Stomach (tissue), 19 donors: ENCODE measurements at regions of chr15 and their contacts with region 1.

Region 1: DNA sequence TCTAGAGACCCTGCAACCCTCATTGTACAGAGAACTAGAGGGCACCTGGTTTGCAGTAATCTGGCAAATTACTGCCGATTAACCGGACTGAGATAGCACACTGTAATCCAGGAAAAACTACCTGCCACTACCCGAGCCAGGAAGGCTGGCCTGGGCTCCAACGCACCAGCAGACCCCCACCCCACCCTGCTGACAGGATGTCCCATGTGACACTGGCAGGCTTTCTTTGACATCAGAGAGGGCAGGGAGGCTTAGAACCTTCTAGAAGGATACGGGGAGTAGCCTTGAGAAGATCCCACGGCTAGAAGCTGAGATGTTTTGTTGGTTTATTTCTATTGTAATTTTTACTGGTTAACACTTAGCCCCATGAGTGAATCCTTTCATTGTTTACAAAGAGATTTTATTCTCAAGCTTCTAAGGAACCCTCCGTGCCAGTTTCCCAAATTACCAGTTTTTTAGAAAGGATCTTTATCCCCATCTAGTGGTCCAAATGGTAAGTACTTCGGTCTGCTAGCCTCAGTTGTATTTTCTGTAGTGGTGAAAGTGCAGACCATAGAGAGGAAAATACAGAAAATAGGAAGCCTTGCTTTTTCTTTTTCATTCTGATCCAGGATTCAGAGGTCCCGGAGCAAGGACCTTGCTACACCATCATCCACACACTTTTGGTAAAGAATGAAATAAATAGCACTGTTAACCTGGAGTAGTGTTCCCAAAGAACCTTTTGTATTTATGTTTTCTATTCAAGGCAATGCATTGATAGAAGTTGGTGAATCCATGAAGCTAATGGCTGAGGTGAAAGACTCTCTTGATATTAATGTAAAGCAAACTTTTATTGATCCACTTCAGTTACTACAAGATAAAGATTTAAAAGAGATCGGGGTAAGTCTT is 81.9 kb upstream of the ADAMTSL3 start:
- DNase-seq: peak in 1 of 2 donors; percentile 49
- H3K4me3 ChIP-seq: no peak overlapping the region
- H3K27ac ChIP-seq: no peak overlapping the region
- H3K4me1 ChIP-seq: no peaks in the 10 kb centered on the region
- H3K27me3 ChIP-seq: peaks cover 0 to 8% (median 0%) of the 10 kb centered on the region in 3 donors
- CTCF ChIP-seq: peak in 5 of 7 experiments; percentile 8 to 56 (median 27)
- EP300 ChIP-seq: no peak
- POLR2A ChIP-seq: no peak

Region 2: DNA sequence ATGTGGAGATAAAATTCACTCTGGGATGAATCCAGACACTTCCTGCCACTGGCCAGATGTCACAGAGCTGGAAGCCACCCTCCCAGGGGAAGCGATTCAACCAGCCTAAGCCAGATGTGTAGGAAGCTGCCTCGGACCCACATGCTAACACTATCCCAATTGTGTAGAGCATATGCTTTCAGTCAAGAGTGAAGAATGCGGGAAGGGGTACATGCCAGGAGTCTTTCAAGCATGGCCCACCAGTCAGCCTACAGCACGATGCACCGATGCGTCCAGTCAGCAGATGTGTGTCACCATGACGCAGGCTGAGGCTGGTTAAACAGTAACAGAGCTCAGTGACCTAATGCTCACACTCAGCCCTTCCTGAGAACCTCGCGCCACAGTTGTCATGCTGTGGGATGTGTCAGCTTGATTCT is 248.8 kb before region 1 on chr15:
- intact Hi-C with region 1: no loop called
- DNase-seq: peak in 1 of 2 donors; percentile 83
- H3K4me3 ChIP-seq: no peak overlapping the region
- H3K27ac ChIP-seq: no peak overlapping the region
- H3K4me1 ChIP-seq: no peaks in the 10 kb centered on the region
- H3K27me3 ChIP-seq: peaks cover 0 to 11% (median 0%) of the 10 kb centered on the region in 3 donors
- CTCF ChIP-seq: no peak
- EP300 ChIP-seq: no peak
- POLR2A ChIP-seq: no peak

Region 3: GRCh38 chr15:83435182-83435581 is 136.9 kb before region 1 on chr15:
- intact Hi-C with region 1: no loop called
- DNase-seq: no peak
- H3K4me3 ChIP-seq: no peak overlapping the region
- H3K27ac ChIP-seq: no peak overlapping the region
- H3K4me1 ChIP-seq: no peaks in the 10 kb centered on the region
- H3K27me3 ChIP-seq: peaks cover 0 to 43% (median 0%) of the 10 kb centered on the region in 3 donors
- CTCF ChIP-seq: no peak
- EP300 ChIP-seq: no peak
- POLR2A ChIP-seq: no peak

Region 4: DNA sequence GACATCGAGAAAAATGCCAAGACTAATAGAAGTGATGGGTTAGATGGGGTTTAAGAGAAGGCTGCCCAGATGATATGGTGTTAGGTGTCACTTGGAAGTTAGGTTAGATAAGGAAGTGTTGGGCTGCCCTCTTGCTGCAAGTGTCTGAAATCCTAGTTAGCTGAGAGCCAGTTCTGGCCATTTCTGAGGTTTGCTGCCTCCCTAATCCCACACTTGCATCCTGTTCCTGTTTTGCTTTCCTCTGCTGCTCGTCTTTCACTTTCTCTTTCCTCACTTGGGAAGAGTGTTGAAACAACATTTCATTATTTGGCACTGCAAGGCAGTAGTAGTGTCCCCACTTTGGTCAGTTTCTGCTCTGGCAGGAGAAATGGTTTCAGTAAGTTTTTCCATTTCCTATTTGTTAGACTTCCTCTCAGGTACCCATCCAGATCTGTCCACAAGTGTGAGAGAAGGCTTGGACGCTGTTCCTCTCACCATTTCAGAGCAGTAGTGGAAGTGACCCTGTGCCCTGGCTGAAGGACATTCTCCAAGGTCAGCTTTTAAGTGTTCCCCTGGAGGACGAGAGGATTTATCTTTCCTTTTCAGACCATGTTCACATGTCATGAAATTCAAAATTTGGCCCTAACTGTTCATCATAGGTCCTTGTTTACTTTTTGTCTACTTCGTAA is 175.1 kb after region 1 on chr15:
- intact Hi-C with region 1: loop called (anchors 10 kb)
- DNase-seq: peak in 1 of 2 donors; percentile 78
- H3K4me3 ChIP-seq: peak overlapping the region in 1 of 4 donors; percentile 7
- H3K27ac ChIP-seq: peak overlapping the region in 3 of 5 donors; percentile 56 to 74 (median 67)
- H3K4me1 ChIP-seq: peaks cover 0 to 10% (median 3%) of the 10 kb centered on the region in 4 donors
- H3K27me3 ChIP-seq: no peaks in the 10 kb centered on the region
- CTCF ChIP-seq: peak in 2 of 7 experiments; percentile 7 to 21
- EP300 ChIP-seq: no peak
- POLR2A ChIP-seq: no peak

Region 5: GRCh38 chr15:84035399-84035766 is 463.3 kb after region 1 on chr15:
- intact Hi-C with region 1: loop called (anchors 5 kb)
- DNase-seq: peak in 1 of 2 donors; percentile 58
- H3K4me3 ChIP-seq: no peak overlapping the region
- H3K27ac ChIP-seq: no peak overlapping the region
- H3K4me1 ChIP-seq: no peaks in the 10 kb centered on the region
- H3K27me3 ChIP-seq: no peaks in the 10 kb centered on the region
- CTCF ChIP-seq: peak in 1 of 7 experiments; percentile 15
- EP300 ChIP-seq: no peak
- POLR2A ChIP-seq: no peak